Testis (tissue), 5 donors: ENCODE measurements at regions of chr17 and their contacts with region 1.

Region 1: DNA sequence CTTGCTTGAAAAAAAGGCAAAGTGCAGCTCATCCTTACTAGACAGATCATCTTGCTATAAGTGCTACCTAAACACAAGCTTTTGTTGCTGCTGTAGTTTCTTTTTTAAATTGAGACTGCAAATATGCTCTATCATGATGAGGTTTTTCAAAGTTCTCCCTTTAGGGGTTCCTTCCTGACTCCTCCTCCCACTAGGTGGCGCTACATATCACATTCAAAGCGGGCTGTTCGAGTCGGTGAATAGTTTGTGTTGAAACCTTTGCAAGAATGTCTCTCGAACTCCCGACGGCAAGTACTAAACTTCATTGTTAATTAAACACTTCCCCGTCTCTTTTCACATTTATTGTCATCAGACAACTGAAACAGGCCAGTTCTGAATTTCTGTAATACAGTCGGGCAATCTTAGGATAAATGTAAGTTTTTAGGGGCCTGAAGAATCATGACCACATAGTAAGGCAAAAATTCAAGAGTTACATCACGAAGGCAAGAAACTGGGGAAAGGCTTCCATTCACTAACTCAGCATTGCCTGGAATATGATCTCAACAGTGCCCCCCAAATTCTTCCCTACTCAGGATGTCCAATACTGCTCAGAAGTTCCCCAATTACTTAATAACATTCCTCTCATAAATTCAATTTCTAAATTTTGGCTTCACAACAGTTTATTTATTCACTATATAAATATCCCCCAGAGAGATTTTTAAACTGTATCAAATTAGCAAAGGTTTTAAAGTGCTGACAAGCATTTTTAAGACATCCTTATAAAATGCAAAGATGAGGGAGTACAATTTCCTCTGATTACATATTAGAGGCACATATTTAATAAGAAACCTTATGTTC is 6.7 kb downstream of the HS3ST3A1 start:
- DNase-seq: peak; percentile 92
- H3K4me3 ChIP-seq: no peak overlapping the region
- H3K27ac ChIP-seq: no peak overlapping the region
- H3K4me1 ChIP-seq: no peaks in the 10 kb centered on the region
- H3K27me3 ChIP-seq: no peaks in the 10 kb centered on the region
- CTCF ChIP-seq: peak; percentile 80 to 97 (median 88)
- POLR2A ChIP-seq: no peak

Region 2: DNA sequence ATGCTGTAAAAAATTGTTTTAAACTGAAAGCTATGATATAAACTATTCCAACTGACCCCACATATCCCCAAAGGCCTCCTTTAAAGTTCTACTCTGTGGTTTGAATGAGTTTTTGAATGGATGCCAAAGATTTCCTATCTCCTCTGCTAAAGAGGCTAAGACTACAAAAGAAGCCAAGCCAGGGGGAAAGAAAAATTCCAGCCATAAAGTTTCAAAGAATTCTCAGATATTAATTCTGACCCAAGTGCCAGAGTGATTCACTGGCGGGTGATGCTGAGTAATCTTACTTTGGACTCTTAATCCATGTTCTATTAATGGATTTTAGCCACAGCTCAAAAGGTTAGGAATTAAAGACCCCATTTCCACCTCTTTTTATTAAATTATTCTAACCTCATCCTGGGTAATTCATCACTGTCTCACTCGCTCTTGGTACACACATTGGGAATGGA is 53.9 kb before region 1 on chr17:
- intact Hi-C with region 1: no loop called
- DNase-seq: no peak
- H3K4me3 ChIP-seq: no peak overlapping the region
- H3K27ac ChIP-seq: no peak overlapping the region
- H3K4me1 ChIP-seq: peaks cover 3% of the 10 kb centered on the region
- H3K27me3 ChIP-seq: no peaks in the 10 kb centered on the region
- CTCF ChIP-seq: no peak
- POLR2A ChIP-seq: no peak

Region 3: DNA sequence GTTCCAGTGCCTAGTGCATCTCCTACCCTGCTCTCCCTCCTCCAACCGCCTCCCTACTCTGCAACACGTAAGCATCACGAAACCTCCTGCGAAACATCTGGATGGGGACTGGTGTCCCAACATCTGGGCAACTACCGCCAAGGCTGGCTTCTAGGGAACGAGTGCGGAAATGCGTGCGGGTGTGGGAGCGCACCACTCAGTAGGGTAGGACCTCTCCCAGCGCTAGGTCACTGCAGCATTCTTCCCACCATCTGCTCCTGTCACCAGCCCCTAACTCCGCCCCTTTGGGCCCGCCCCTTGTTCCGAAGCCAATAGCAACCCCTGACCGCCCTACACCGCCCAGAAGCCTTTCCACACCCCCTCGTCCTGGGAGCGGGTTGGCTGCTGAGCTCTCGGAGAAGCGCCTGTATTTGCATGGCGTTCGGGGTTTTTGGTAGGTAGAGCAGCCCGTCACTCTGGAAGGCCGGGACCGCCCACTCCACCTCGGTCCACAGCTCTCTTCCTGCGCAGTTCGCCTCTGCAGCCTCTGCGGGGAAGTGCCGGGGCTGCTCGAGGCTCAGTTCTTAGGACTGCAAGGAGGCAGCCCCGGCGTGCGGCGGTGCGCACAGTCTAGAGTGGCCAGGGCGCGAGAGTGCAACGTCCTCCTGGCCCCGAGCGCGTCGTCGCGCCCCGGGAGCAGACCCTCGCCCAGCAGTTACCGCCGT is 705.7 kb after region 1 on chr17 and contains the start of gene HS3ST3B1:
- intact Hi-C with region 1: loop called (anchors 10 kb)
- DNase-seq: peak; percentile 98
- H3K4me3 ChIP-seq: peak within 1 kb of the TSS; percentile 52 to 66
- H3K27ac ChIP-seq: peak within 1 kb of the TSS; percentile 21 to 31
- H3K4me1 ChIP-seq: peaks cover 5% of the 10 kb centered on the region
- H3K27me3 ChIP-seq: no peaks in the 10 kb centered on the region
- CTCF ChIP-seq: peak in 1 of 3 experiments; percentile 14
- POLR2A ChIP-seq: peak; percentile 66
- total RNA-seq, gene HS3ST3B1: 1.5 to 1.9 TPM